ENCODE measurements at regions of chr4 and their contacts with region 1.

Region 1: GRCh38 chr4:80897537-80898303 is 132.8 kb upstream of the BMP3 start:
- DNase-seq: no peak
- ATAC-seq: peak; percentile 23
- H3K4me3 Mint-ChIP-seq: no peak overlapping the region
- H3K27ac Mint-ChIP-seq: no peak overlapping the region
- H3K4me1 Mint-ChIP-seq: no peaks in the 10 kb centered on the region
- H3K27me3 Mint-ChIP-seq: peaks cover 4% of the 10 kb centered on the region

Region 2: DNA sequence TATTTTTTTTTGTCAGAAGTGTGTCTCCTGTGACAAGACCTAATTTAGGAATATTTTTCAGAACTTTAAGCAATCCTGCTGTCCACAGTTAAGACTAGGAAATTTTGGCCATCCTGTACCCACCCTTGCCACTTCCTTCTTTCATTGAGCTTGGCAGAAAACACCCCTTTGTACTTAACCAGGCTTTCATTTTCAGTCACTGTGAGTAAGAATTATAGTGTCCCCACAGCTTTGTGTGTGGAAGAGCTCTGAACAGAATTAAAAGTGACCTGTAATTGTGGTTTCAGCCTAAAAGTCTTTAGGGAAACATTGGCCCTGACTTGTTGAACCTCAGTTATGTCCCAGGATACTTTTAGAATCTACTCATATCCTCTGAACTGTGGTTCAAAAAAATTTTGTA is 20.9 kb before region 1 on chr4:
- CTCF ChIA-PET with region 1: no interaction called
- POLR2A ChIA-PET with region 1: no interaction called
- intact Hi-C with region 1: loop called in 1 of 2 experiments (anchors 2 kb)
- DNase-seq: no peak
- ATAC-seq: no peak
- H3K4me3 Mint-ChIP-seq: no peak overlapping the region
- H3K27ac Mint-ChIP-seq: no peak overlapping the region
- H3K4me1 Mint-ChIP-seq: peaks cover 1% of the 10 kb centered on the region
- H3K27me3 Mint-ChIP-seq: peaks cover 5% of the 10 kb centered on the region

Measured in activated CD4-positive, alpha-beta T cell treated with anti-CD3 and anti-CD28 coated beads for 36 hours (primary cell).